Heart left ventricle (tissue), 16 donors: ENCODE measurements at regions of chr17 and their contacts with region 1.

Region 1: GRCh38 chr17:39164675-39165143 is 1.3 kb downstream of the ARL5C start:
- DNase-seq: peak; percentile 90 to 94 (median 93)
- ATAC-seq: peak; percentile 83 to 95 (median 92)
- H3K4me3 ChIP-seq: peak overlapping the region; percentile 40 to 68 (median 58)
- H3K27ac ChIP-seq: peak overlapping the region in 6 of 12 donors; percentile 19 to 65 (median 44)
- H3K4me1 ChIP-seq: peaks cover 0 to 51% (median 26%) of the 10 kb centered on the region in 12 donors
- H3K27me3 ChIP-seq: no peaks in the 10 kb centered on the region
- CTCF ChIP-seq: peak; percentile 70 to 87 (median 80)
- POLR2A ChIP-seq: peak in 1 of 2 donors; percentile 35

Region 2: DNA sequence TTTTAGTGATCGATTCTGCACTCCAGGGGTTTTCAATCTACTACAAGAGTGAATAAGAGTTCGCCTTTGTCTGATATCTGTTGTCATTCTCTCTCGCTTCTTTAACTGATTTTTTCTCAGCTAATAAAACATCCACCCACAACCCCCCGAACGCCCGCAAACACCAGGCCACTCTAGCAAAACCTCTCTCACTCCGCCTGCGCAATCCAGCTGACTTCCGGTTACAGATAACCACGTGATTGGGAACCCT is 35.0 kb after region 1 on chr17:
- intact Hi-C with region 1: loop called in 1 of 10 experiments (anchors 1 kb)
- DNase-seq: peak; percentile 90 to 94 (median 91)
- ATAC-seq: peak; percentile 70 to 92 (median 84)
- H3K4me3 ChIP-seq: peak overlapping the region; percentile 71 to 99 (median 82)
- H3K27ac ChIP-seq: peak overlapping the region; percentile 92 to 100 (median 98)
- H3K4me1 ChIP-seq: peaks cover 0 to 57% (median 33%) of the 10 kb centered on the region in 12 donors
- H3K27me3 ChIP-seq: no peaks in the 10 kb centered on the region
- CTCF ChIP-seq: no peak
- POLR2A ChIP-seq: no peak